A673 (cell line): ENCODE measurements at regions of chr4 and their contacts with region 1.

Region 1: GRCh38 chr4:20422398-20422797 is 170.7 kb downstream of the SLIT2 start:
- DNase-seq: peak; percentile 70
- H3K4me3 ChIP-seq: no peak overlapping the region
- H3K27ac ChIP-seq: no peak overlapping the region
- H3K4me1 ChIP-seq: peaks cover 31% of the 10 kb centered on the region
- H3K27me3 ChIP-seq: no peaks in the 10 kb centered on the region
- CTCF ChIP-seq: peak; percentile 68

Region 2: GRCh38 chr4:18689308-18690115 is 1732.9 kb before region 1 on chr4:
- CTCF ChIA-PET with region 1: no interaction called
- POLR2A ChIA-PET with region 1: no interaction called
- intact Hi-C with region 1: loop called (anchors 10 kb)
- DNase-seq: peak; percentile 69
- H3K4me3 ChIP-seq: no peak overlapping the region
- H3K27ac ChIP-seq: no peak overlapping the region
- H3K4me1 ChIP-seq: no peaks in the 10 kb centered on the region
- H3K27me3 ChIP-seq: no peaks in the 10 kb centered on the region
- CTCF ChIP-seq: peak; percentile 86

Region 3: GRCh38 chr4:20318001-20318908 is 104.1 kb before region 1 on chr4:
- CTCF ChIA-PET with region 1: no interaction called
- POLR2A ChIA-PET with region 1: no interaction called
- intact Hi-C with region 1: loop called (anchors 5 kb)
- DNase-seq: peak; percentile 61
- H3K4me3 ChIP-seq: peak overlapping the region; percentile 13
- H3K27ac ChIP-seq: peak overlapping the region; percentile 82
- H3K4me1 ChIP-seq: peaks cover 46% of the 10 kb centered on the region
- H3K27me3 ChIP-seq: no peaks in the 10 kb centered on the region
- CTCF ChIP-seq: no peak

Region 4: DNA sequence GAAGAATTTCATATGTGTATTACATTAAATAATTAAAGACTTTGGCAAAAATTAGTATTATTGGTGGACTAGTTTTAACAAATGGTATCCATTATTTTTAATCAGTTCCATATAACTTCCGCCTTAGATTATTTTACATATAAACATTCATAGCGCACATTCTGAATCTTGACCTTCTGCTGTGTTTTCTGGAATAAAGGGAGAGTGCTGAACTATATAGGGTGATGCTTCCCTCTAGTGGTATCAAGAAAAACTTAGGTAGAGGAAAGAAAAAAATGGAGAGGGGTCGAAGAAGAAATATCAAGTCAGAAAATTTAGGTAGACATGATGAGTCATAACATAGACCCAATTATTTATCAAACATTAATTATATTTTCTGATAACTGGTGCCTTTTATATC is 122.2 kb after region 1 on chr4:
- CTCF ChIA-PET with region 1: no interaction called
- POLR2A ChIA-PET with region 1: no interaction called
- intact Hi-C with region 1: loop called (anchors 1 kb)
- DNase-seq: peak; percentile 66
- H3K4me3 ChIP-seq: no peak overlapping the region
- H3K27ac ChIP-seq: no peak overlapping the region
- H3K4me1 ChIP-seq: peaks cover 5% of the 10 kb centered on the region
- H3K27me3 ChIP-seq: no peaks in the 10 kb centered on the region
- CTCF ChIP-seq: peak; percentile 69

Region 5: DNA sequence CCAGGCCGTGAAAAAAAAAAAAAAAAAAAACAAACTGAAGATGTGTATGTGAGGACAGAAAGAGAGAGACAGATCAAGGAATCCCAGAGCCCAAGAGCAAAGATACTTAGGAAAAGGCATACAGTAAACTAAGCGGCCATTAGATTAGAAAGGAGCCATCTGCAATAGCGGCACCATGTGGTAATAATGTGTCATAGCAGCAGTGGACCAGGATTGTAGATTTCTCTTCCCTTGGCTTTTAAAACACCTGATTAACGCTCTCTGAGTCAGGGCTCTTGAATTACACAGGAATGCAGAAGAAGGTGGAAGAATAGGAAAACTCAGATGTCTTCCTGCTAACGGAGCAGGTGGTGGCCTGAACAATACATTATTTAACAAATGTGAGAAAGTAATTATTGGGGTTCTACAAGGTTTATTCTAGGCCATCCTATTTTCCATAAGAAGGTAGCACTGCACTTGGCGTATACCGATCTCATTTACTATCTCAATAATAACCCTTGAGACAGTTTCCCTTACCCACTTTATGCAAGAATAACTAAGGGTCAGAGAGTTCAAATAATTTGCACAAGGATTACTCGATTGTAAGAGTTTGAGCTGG is 1343.5 kb after region 1 on chr4:
- CTCF ChIA-PET with region 1: no interaction called
- POLR2A ChIA-PET with region 1: no interaction called
- intact Hi-C with region 1: loop called (anchors 10 kb)
- DNase-seq: peak; percentile 52
- H3K4me3 ChIP-seq: no peak overlapping the region
- H3K27ac ChIP-seq: no peak overlapping the region
- H3K4me1 ChIP-seq: no peaks in the 10 kb centered on the region
- H3K27me3 ChIP-seq: no peaks in the 10 kb centered on the region
- CTCF ChIP-seq: peak; percentile 88